Tibial artery (tissue), 4 donors: ENCODE measurements at regions of chr17 and their contacts with region 1.

Region 1: DNA sequence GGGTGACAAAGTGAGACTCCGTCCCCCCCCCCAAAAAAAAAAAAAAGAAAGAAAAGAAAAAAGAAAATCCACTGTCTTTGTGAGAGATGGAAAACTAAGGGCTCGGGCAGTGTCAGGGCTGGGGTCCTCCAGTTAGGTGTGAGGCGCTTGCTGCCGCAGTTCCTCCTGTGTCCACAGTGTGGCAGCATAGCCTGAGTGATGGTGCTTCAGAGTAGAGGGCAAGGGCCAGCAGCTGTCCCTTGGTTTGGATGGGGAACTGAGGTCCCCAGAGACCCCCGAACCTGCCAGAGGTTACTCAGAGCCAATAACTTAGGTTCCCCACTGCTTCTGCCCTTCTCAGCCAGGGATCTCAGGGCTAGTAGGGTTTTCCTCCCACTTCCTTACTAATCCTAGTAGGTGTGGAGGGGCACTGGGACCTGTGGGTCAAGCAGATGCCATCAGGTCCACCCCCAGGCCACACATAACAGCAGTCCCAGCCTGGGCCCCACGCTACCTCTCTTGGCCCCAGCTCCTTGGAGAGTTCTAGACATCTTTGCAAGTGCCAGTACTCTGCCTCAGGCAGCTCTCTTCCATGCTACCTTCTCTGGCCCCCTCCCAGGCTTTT is 7.9 kb upstream of the LLGL1 start:
- DNase-seq: peak; percentile 78 to 83
- H3K4me3 ChIP-seq: no peak overlapping the region
- H3K27ac ChIP-seq: no peak overlapping the region
- H3K4me1 ChIP-seq: peaks cover 0 to 9% (median 4%) of the 10 kb centered on the region in 4 donors
- H3K27me3 ChIP-seq: no peaks in the 10 kb centered on the region
- CTCF ChIP-seq: peak; percentile 80 to 92

Region 2: DNA sequence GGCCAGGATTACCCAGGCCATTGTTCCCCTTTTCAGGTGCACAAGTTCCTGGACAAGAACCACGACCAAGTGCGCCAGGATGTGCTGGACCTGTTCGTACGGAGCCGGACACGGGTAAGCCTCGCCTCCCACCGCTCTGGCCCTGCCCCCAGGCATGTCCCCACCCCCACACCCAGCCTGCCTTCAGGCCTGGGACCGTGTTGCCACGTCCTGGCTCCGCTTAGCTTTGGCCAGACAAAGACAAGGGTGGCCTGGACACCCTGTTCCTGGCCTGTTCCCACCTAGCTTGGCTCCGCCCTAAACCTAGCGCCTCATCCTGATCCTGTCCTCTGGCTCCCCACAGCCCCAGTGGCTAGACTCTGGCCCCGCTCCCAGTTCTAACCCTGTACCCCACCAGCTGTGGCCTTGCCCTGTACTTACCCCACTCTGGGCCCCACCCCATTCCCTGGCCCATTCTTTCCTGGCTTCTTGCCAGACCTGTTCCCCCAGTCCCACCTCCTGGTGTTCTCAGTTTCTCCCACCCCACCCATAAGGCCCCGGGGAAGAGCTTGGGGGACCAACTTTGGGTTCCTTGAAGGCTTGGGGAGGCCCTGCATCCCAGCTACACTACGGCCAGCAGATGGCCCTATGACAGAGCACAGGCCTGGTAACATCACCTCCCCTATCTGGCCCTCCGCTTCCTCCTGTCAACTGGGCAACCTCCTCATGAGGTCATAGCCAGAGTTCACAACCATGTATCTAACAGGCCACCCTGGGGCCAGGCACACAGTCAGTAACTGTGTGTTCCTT is 77.8 kb before region 1 on chr17:
- intact Hi-C with region 1: loop called (anchors 5 kb)
- DNase-seq: no peak
- H3K4me3 ChIP-seq: no peak overlapping the region
- H3K27ac ChIP-seq: no peak overlapping the region
- H3K4me1 ChIP-seq: peaks cover 0 to 4% (median 0%) of the 10 kb centered on the region in 4 donors
- H3K27me3 ChIP-seq: peaks cover 0 to 84% of the 10 kb centered on the region in 2 donors
- CTCF ChIP-seq: no peak

Region 3: DNA sequence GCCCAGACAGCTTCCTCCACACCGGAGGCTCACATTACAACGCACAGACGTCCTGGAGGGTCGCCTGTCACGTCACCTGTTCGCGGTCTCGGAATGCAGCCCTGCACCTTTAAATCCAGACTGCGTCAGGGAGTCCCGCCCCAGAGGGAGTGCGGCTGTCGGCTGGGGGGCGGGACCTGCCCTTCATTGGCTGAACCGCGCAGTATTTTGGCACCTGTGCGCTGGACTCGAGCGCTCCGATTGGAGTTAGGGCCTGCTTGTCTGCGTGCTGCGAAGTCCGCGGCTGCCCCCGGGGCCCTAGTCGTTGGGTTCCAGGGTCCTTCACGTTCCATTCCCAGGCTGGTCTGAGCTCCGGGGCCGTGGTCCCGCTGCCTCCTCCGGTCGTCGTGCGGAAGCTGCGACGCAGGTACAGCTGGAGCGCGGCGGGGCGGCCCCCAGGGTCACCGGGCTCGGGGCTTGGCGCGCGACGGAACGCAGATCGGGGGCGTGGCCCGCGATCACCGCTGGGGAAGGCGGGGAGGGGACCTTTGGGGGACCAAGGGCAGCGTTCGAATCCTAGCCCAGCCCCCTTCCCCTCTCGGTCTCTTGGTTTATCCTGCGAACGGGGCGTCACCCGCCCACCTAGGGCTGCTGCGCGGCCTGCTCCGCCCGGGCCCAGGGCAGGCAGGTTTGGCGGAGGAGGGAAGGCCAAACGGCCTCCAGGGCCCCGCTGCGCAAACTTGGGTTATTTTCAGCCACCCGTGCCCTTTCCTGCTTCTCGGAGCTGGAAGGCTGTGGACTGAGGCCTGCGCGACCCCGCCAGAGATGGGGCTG is 43.0 kb after region 1 on chr17 and contains the start of gene MIEF2:
- intact Hi-C with region 1: no loop called
- DNase-seq: peak; percentile 95 to 97
- H3K4me3 ChIP-seq: peak within 1 kb of the TSS; percentile 69 to 87
- H3K27ac ChIP-seq: peak within 1 kb of the TSS; percentile 92 to 98
- H3K4me1 ChIP-seq: peaks cover 0 to 54% (median 45%) of the 10 kb centered on the region in 4 donors
- H3K27me3 ChIP-seq: no peaks in the 10 kb centered on the region
- CTCF ChIP-seq: no peak